Activated CD8-positive, alpha-beta memory T cell treated with anti-CD3 and anti-CD28 coated beads, Interleukin-2, amount 10 ng/mL, durations not matched to agents 7 days and 5 days (primary cell): ENCODE measurements at regions of chr22 and their contacts with region 1.

Region 1: GRCh38 chr22:32265882-32266767 is 11.0 kb upstream of the SLC5A4 start:
- DNase-seq: peak; percentile 82
- ATAC-seq: peak; percentile 85
- H3K4me3 Mint-ChIP-seq: no peak overlapping the region
- H3K27ac Mint-ChIP-seq: no peak overlapping the region
- H3K4me1 Mint-ChIP-seq: peaks cover 6% of the 10 kb centered on the region
- H3K27me3 Mint-ChIP-seq: peaks cover 11% of the 10 kb centered on the region

Region 2: GRCh38 chr22:31977141-31977841 is 288.8 kb before region 1 on chr22:
- CTCF ChIA-PET with region 1: interaction called, 17 read pairs
- DNase-seq: peak; percentile 86
- ATAC-seq: peak; percentile 96
- H3K4me3 Mint-ChIP-seq: no peak overlapping the region
- H3K27ac Mint-ChIP-seq: no peak overlapping the region
- H3K4me1 Mint-ChIP-seq: peaks cover 5% of the 10 kb centered on the region
- H3K27me3 Mint-ChIP-seq: peaks cover 14% of the 10 kb centered on the region

Region 3: DNA sequence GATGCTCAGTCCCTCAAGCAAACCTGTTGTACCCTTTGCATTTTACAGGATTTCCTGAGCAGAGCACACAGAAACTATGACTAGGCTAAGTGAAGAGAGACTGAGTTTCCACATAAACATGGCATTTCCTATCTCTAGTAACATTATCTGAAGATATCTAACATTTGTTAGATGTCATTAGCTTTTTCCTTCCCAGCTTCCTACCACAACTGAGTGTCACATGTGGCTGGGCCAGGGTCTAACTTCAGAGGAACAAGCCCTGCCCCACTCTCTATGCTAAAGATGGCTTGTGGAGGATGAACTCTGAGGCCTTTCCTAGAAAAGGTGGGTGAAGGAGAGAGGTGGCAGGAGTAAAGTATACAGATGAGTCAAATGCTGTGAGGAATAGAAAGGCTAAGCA is 123.5 kb before region 1 on chr22:
- CTCF ChIA-PET with region 1: interaction called, 17 read pairs
- DNase-seq: peak; percentile 62
- ATAC-seq: peak; percentile 34
- H3K4me3 Mint-ChIP-seq: no peak overlapping the region
- H3K27ac Mint-ChIP-seq: peak overlapping the region; percentile 91
- H3K4me1 Mint-ChIP-seq: peaks cover 63% of the 10 kb centered on the region
- H3K27me3 Mint-ChIP-seq: no peaks in the 10 kb centered on the region